ENCODE measurements at regions of chr20 and their contacts with region 1.

Region 1: DNA sequence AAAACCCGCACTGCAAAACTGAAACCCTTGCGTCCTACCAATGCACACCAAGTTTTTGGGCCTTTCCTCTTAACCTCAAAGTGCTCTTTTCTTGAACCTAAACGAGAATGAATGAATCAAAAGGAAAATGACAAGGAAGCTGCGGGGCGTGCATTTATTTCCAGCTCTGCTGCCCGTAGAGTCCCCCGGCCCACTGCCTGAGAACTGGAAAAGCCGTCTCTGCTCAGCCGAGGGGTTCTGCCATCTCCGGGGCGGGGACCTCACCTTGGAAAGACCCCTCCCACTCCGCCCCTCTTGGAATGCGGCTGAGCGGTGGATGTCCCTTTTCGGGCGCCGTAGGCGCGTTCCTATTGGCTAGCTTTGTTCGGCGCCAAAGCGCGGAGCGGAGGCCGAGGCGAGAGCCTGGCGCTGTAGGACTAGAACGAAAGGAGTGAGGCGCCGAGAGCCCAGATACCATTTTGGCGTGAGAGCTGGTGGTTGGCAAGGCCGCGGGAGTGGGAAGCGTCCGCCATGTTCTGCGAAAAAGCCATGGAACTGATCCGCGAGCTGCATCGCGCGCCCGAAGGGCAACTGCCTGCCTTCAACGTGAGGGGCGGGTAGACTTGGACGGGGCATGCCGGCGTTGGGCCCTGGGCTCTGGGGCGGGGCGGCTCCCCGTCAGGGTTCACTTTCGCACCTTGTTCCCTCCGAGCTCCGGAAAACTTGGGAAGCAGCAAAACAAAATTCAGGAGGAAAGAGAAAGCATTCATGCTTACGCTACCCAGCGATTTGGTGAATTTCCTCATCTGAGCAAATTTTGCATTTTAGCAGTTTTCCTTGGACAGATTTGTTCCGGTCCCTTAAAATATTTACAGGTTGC is at the start of gene GINS1:
- DNase-seq: peak; percentile 37 to 82 (median 66)
- ATAC-seq: peak; percentile 86
- H3K4me3 ChIP-seq: peak within 1 kb of the TSS; percentile 71 to 85
- H3K4me3 Mint-ChIP-seq: peak within 1 kb of the TSS; percentile 94
- H3K27ac ChIP-seq: peak within 1 kb of the TSS; percentile 30 to 40
- H3K27ac Mint-ChIP-seq: peak within 1 kb of the TSS; percentile 87
- H3K4me1 ChIP-seq: peaks cover 5% of the 10 kb centered on the region
- H3K4me1 Mint-ChIP-seq: peaks cover 10% of the 10 kb centered on the region
- H3K27me3 ChIP-seq: no peaks in the 10 kb centered on the region
- H3K27me3 Mint-ChIP-seq: no peaks in the 10 kb centered on the region
- CTCF ChIP-seq: no peak
- total RNA-seq, gene GINS1: 0.28 to 0.30 TPM

Region 2: GRCh38 chr20:25247956-25248785 is 159.4 kb before region 1 on chr20 and contains the start of gene PYGB:
- CTCF ChIA-PET with region 1: no interaction called
- POLR2A ChIA-PET with region 1: interaction called, 4 read pairs
- intact Hi-C with region 1: loop called in 1 of 2 experiments (anchors 5 kb)
- DNase-seq: peak; percentile 65 to 87 (median 70)
- ATAC-seq: peak; percentile 88
- H3K4me3 ChIP-seq: peak within 1 kb of the TSS; percentile 97 to 99
- H3K4me3 Mint-ChIP-seq: peak within 1 kb of the TSS; percentile 93
- H3K27ac ChIP-seq: peak within 1 kb of the TSS; percentile 53 to 80
- H3K27ac Mint-ChIP-seq: peak within 1 kb of the TSS; percentile 91
- H3K4me1 ChIP-seq: peaks cover 29% of the 10 kb centered on the region
- H3K4me1 Mint-ChIP-seq: peaks cover 54% of the 10 kb centered on the region
- H3K27me3 ChIP-seq: no peaks in the 10 kb centered on the region
- H3K27me3 Mint-ChIP-seq: no peaks in the 10 kb centered on the region
- CTCF ChIP-seq: no peak
- total RNA-seq, gene PYGB: 35.2 to 39.2 TPM

Measured in CD8-positive, alpha-beta T cell (primary cell).